AG04449 (cell line): ENCODE measurements at regions of chr16 and their contacts with region 1.

Region 1: DNA sequence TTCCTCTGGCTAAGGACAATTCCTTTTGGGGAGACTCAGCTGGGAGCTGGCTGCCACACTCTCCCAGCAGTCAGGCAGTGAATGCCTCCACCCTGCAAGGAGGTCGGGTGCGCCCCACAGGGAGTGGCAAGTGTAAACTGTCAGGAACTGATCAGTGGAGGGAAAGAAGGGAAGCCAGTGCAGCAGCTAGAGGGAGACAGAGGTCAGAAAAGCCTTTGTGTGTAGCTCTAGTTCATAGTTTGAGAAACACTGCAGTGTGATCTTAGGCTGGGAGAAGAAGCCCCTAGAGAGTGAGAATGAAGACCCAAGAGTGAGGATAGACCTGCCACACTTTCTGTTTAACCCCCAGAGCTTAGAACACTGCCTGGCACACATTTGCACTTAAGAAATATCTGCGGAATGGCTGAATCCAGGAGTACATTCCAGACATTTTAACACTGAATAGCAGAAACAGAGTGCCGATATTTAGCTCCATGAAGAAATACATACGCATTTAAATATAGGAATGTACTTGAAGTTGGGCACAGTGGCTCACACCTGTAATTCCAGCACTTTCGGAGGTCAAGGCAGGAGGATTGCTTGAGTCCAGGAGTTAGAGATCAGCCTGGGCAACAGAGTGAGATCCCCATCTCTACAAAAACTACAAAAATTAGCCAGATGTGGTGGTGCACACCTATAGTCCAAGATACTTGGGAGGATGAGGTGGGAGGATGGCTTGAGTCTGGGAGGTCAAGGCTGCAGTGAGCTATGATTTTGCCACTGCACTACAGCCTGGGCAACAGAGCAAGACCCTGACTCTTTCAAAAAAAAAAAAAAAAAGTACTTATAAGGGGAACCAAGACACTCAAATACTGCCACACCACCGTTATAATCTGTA is 11.1 kb upstream of the SLC5A11 start:
- DNase-seq: no peak
- H3K4me3 ChIP-seq: no peak overlapping the region
- CTCF ChIP-seq: peak; percentile 72

Region 2: GRCh38 chr16:24807301-24807700 is 27.4 kb before region 1 on chr16:
- CTCF ChIA-PET with region 1: no interaction called
- POLR2A ChIA-PET with region 1: no interaction called
- DNase-seq: no peak
- H3K4me3 ChIP-seq: no peak overlapping the region
- CTCF ChIP-seq: no peak

Region 3: DNA sequence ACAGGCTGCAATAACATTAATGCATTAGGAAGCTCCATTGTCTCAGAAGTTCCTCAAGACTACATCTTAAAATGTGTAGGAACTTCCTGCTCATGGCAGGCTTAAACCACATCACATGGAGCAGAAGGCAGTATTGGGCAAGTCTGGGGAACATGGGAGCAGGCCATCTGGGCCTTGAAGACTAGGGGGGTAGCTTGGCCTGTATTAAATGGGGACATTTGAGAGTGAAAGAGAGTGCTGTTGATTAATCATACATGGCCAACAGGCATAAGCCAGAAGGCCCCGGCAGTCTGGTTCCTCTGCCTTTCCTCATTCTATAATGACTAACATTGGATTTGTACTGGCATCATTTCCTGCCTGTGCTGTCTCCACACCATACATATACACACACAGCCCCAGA is 14.2 kb before region 1 on chr16:
- CTCF ChIA-PET with region 1: interaction called, 11 read pairs
- POLR2A ChIA-PET with region 1: no interaction called
- DNase-seq: no peak
- H3K4me3 ChIP-seq: no peak overlapping the region
- CTCF ChIP-seq: no peak

Region 4: GRCh38 chr16:24848065-24848464 is 13.4 kb after region 1 on chr16:
- CTCF ChIA-PET with region 1: interaction called, 10 read pairs
- POLR2A ChIA-PET with region 1: no interaction called
- DNase-seq: no peak
- H3K4me3 ChIP-seq: no peak overlapping the region
- CTCF ChIP-seq: no peak

Region 5: DNA sequence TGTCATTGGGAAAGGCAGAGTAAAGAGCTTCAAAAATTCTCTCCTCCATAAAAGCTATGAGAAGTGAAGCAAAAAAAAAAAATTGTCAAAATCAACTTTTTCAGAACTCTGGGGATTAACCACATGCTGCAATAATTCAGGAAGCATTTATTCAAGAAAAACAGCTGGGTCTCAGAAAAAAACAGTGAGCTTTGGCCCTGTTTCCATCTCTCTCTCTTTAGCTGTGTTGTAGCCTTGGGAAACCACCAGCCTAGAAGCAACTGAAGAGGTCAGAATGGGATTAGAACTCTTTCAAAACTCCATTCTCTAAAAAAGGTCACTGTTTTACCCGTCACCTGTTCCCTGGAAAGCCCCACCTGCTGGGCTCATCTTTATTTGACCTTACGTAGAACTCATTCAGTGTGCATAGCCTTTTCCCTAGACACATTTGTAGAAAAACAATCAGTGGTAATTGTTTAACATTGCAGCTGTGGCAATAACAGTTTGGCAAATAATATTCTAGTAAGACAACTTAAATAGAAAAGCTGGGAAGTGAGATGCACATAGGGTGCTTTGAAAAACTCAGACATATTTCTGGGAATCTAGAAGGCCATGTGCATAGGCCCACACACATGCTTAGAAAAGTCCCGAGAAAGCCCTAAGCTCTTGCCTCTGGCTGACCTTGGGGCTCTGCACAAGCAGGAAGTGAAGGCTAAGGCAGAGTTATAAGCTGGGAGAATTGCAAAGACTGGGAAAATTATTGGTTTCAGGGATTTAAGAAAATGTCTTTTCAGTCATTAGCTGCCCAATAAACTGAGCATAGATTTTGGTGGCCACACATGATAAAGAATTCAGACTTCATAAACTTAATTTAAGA is 29.1 kb after region 1 on chr16:
- CTCF ChIA-PET with region 1: no interaction called
- POLR2A ChIA-PET with region 1: no interaction called
- DNase-seq: no peak
- H3K4me3 ChIP-seq: no peak overlapping the region
- CTCF ChIP-seq: no peak